HepG2 (cell line): ENCODE measurements at regions of chr6 and their contacts with region 1.

Region 1: GRCh38 chr6:153023977-153024708 is 21.6 kb upstream of the MTRF1L start:
- DNase-seq: peak; percentile 75
- ATAC-seq: peak; percentile 99
- H3K4me3 ChIP-seq: no peak overlapping the region
- H3K27ac ChIP-seq: no peak overlapping the region
- H3K4me1 ChIP-seq: peaks cover 8% of the 10 kb centered on the region
- H3K27me3 ChIP-seq: peaks cover 0 to 7% of the 10 kb centered on the region in 2 experiments; a peak in 1 of 5 replicates
- CTCF ChIP-seq: peak; percentile 92
- EP300 ChIP-seq: no peak
- POLR2A ChIP-seq: no peak
- RAD21 ChIP-seq: peak; percentile 73

Region 2: GRCh38 chr6:152750694-152751093 is 273.4 kb before region 1 on chr6 and contains the start of gene VIP:
- CTCF ChIA-PET with region 1: no interaction called
- POLR2A ChIA-PET with region 1: no interaction called
- in situ Hi-C with region 1: no loop called
- intact Hi-C with region 1: loop called (anchors 5 kb)
- DNase-seq: peak; percentile 35
- ATAC-seq: peak; percentile 89
- H3K4me3 ChIP-seq: no peak within 1 kb of the TSS
- H3K27ac ChIP-seq: no peak within 1 kb of the TSS
- H3K4me1 ChIP-seq: peaks cover 8% of the 10 kb centered on the region; the same call in 1 of the 2 replicates
- H3K27me3 ChIP-seq: no peaks in the 10 kb centered on the region
- CTCF ChIP-seq: no peak
- EP300 ChIP-seq: no peak
- POLR2A ChIP-seq: no peak
- RAD21 ChIP-seq: no peak
- total RNA-seq, gene VIP: not detected in 2 replicates

Region 3: DNA sequence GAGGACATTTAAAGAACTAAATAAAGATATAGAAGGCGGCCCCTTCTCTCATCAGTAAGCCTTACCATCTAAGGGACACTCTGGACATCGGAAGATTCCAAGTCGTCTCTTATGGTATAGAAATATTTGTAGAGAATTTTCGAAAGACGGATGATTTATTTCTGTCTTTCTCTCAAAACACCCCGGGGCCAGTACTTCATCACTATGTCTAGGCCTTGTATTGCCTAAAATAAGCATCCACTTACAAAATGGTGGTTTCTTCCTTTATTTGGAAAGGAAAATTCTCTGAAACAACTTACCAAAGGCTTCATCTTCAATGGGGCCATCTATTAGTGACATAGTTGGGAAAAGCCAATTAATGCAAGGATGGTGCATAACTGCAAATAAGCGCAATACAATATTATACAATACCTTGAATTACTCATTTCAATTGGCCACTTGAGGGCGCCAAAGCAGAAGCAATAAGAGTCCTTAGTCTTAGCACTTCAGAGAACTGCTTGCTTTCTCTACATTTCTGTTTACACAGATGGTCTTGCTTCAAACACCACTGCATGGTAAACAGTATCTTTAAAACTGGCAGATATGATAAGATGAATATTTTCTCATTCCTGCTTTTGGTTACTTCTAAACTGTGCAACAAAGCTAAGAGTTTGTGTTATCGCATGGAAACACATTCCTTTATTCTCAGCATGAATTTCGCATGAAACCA is 160.4 kb before region 1 on chr6:
- CTCF ChIA-PET with region 1: interaction called, 13 read pairs
- POLR2A ChIA-PET with region 1: no interaction called
- in situ Hi-C with region 1: loop called (anchors 10 kb)
- intact Hi-C with region 1: loop called (anchors 1 kb)
- DNase-seq: peak; percentile 74
- ATAC-seq: peak; percentile 98
- H3K4me3 ChIP-seq: no peak overlapping the region
- H3K27ac ChIP-seq: no peak overlapping the region
- H3K4me1 ChIP-seq: no peaks in the 10 kb centered on the region
- H3K27me3 ChIP-seq: no peaks in the 10 kb centered on the region
- CTCF ChIP-seq: peak; percentile 88
- EP300 ChIP-seq: no peak
- POLR2A ChIP-seq: no peak
- RAD21 ChIP-seq: peak; percentile 65

Region 4: GRCh38 chr6:152948150-152948768 is 75.9 kb before region 1 on chr6:
- CTCF ChIA-PET with region 1: no interaction called
- POLR2A ChIA-PET with region 1: no interaction called
- in situ Hi-C with region 1: no loop called
- intact Hi-C with region 1: loop called (anchors 1 kb)
- DNase-seq: peak; percentile 54
- ATAC-seq: peak; percentile 94
- H3K4me3 ChIP-seq: no peak overlapping the region
- H3K27ac ChIP-seq: no peak overlapping the region
- H3K4me1 ChIP-seq: no peaks in the 10 kb centered on the region
- H3K27me3 ChIP-seq: peaks cover 2 to 5% of the 10 kb centered on the region in 2 experiments; a peak in 3 of 5 replicates
- CTCF ChIP-seq: peak; percentile 83
- EP300 ChIP-seq: no peak
- POLR2A ChIP-seq: no peak
- RAD21 ChIP-seq: peak; percentile 68

Region 5: DNA sequence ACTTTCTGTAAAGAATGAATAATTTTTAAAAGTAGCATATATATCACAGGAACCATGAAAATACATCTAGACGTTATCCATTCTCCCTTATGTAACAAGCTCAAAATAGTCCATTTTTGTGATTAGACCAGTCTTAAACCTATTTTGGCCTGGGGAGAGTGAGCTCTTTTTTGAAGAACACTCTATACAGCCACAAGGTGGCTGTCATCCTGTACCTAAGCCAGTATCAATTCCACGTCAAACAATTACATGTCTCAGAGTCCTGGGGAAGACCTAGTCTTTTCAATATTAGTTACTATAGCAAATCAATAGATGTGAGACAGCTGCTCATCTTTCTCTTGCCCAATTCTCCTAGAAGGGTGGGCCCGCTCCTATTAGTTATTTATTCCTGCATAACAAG is 69.7 kb before region 1 on chr6:
- CTCF ChIA-PET with region 1: interaction called, 8 read pairs
- POLR2A ChIA-PET with region 1: no interaction called
- in situ Hi-C with region 1: no loop called
- intact Hi-C with region 1: loop called (anchors 1 kb)
- DNase-seq: no peak
- ATAC-seq: peak; percentile 80
- H3K4me3 ChIP-seq: no peak overlapping the region
- H3K27ac ChIP-seq: no peak overlapping the region
- H3K4me1 ChIP-seq: peaks cover 9% of the 10 kb centered on the region; the same call in 1 of the 2 replicates
- H3K27me3 ChIP-seq: no peaks in the 10 kb centered on the region
- CTCF ChIP-seq: peak; percentile 47
- EP300 ChIP-seq: no peak
- POLR2A ChIP-seq: no peak
- RAD21 ChIP-seq: no peak

Region 6: DNA sequence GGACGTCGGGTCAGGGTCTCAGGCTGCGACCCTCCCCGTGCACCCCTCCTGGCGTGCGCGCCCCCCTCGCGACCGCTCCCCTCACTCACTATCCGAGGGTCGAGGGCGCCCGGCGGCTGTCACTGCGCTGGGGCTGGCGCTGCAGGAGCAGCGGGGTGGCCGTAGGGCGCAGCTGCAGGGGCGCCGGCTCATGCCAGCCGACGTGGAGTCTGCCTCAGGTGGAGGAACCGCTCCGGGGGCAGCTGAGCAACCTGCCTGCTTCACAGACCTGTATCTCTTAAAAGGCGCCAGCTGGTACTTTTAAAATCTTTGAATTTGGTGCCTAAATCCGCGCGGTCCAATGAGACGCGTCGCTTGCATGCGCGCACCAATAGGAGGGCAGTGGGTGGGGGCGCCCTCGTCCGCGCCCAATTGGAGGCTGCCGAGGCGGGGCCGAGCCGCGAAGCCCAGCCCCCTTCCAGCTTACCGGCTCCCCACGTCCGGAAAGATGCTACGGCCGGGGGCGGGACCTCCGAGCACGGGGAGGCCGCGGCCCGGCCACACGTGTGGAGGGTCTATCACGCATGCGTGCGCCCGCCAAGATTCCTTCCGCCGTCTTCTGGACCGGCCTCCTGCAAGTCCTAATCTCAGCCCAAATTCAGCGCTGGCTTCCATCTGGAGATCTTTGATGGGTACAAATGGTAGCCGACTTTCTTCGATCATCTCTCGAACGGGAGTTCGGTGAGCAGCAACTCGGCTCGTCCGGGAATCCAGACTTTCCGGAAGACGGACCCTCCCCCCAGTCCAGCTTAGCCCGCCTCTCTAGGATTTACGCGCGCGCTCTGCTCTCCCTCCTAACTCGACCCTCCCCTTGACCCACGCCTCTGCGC is 41.1 kb before region 1 on chr6 and contains the start of gene FBXO5:
- CTCF ChIA-PET with region 1: no interaction called
- POLR2A ChIA-PET with region 1: no interaction called
- in situ Hi-C with region 1: no loop called
- intact Hi-C with region 1: loop called (anchors 2 kb)
- DNase-seq: peak; percentile 96
- ATAC-seq: peak; percentile 93
- H3K4me3 ChIP-seq: peak within 1 kb of the TSS; percentile 74 to 100 (median 97)
- H3K27ac ChIP-seq: peak within 1 kb of the TSS; percentile 92
- H3K4me1 ChIP-seq: peaks cover 55% of the 10 kb centered on the region
- H3K27me3 ChIP-seq: no peaks in the 10 kb centered on the region; a peak in 1 of 5 replicates
- CTCF ChIP-seq: no peak
- EP300 ChIP-seq: 0 out of 4 replicates have a peak, but pooled peaks of 1 of the 2 experiments have one; percentile 36
- POLR2A ChIP-seq: peak; percentile 80 to 87
- RAD21 ChIP-seq: peak; percentile 11; the same call in 1 of the 2 replicates
- total RNA-seq, gene FBXO5: 41.5 and 53.4 TPM in 2 replicates

Region 7: DNA sequence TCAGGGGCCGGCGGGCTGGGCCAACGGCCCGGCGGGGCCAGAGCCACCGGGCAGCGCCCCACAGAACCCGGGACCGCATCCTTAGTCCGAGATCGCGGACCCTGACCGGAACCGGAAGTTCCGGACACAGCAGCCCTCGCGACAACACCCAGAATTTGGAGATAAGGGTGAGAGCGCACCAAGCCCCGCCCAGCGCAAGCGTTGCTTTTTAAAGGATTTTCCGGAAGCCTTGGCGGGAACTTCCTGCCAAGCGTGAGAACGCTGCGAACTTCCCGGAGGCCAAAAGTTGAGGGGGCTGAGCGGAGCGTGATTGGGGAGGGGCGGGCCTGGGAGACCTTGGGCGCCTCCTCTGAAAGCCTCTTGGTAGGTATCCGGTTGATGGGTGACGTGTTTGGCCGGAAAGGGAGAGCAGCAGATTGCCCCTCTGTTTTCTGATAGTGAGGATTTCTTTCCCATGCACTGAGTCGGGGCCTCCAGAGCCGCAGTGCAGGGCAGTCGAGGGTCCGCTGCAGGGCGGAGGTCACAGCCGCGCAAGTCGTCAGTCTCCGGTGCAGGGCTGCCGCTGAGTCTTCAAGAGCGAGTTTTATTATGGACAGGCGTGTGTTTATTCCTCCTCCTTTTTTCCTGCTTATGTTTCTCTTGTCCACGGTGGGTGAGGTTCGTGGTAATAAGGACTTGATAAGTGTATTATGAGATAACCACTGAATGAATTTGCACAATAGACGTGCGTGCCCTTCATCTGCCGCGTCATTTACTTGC is 21.4 kb before region 1 on chr6 and contains the start of gene MTRF1L:
- CTCF ChIA-PET with region 1: no interaction called
- POLR2A ChIA-PET with region 1: no interaction called
- in situ Hi-C with region 1: no loop called
- intact Hi-C with region 1: loop called (anchors 1 kb)
- DNase-seq: peak; percentile 99
- ATAC-seq: peak; percentile 97
- H3K4me3 ChIP-seq: peak within 1 kb of the TSS; percentile 69 to 93 (median 92)
- H3K27ac ChIP-seq: peak within 1 kb of the TSS; percentile 88
- H3K4me1 ChIP-seq: peaks cover 33% of the 10 kb centered on the region
- H3K27me3 ChIP-seq: no peaks in the 10 kb centered on the region; a peak in 2 of 5 replicates
- CTCF ChIP-seq: 0 out of 2 replicates have a peak, but pooled peaks have one; percentile 10
- EP300 ChIP-seq: no peak
- POLR2A ChIP-seq: peak; percentile 53 to 70; a peak in 3 of 4 replicates
- RAD21 ChIP-seq: 0 out of 2 replicates have a peak, but pooled peaks have one; percentile 25
- total RNA-seq, gene MTRF1L: 28.7 and 32.4 TPM in 2 replicates